ENCODE measurements at regions of chr9 and their contacts with region 1.

Region 1: DNA sequence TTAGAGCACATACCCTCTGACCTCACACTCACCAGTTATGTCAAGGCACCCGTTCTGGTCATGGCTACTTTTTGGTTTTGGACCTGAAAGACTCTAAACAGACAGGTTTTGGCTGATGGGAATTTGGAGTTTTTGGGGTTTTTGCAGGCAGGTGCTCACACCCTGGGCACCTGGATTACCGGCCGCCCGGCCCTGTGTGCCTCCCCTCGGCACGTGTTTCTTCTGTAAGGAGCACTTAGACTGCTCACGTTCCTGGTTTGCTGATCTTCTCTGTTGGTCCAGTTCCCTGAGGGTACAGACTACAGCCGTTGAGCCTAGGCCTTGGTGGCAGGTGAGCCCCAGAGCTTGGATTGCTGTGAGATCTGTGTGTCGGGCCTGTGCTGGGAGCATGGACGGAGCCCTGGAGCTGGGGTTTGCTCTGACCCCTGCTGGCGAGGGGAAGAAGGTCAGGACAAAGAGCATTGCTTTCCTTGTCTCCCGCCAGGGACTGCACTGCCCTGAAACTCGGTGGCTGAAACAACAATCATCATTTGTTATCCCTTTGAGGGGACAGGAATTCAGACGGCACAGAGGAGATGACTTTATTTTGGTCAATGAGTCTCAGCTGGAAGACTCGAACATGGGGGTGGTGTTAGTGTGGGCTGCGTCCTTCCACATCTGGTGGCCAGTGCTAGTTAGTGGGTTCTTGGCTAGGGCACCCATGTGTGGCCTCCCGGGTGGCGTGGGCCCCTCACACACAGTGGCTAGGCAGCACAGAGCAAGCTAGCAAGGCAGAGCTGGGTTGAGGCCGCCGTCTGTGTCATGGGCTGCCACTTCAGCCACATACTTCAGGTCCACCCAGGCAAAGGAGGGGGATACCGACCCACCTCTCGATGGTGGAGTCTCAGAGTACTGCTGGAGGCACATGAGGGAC is 76.4 kb downstream of the EHMT1 start:
- DNase-seq: peak; percentile 22
- H3K4me3 Mint-ChIP-seq: no peak overlapping the region
- H3K27ac Mint-ChIP-seq: no peak overlapping the region
- H3K4me1 Mint-ChIP-seq: peaks cover 53% of the 10 kb centered on the region
- H3K27me3 Mint-ChIP-seq: no peaks in the 10 kb centered on the region

Region 2: DNA sequence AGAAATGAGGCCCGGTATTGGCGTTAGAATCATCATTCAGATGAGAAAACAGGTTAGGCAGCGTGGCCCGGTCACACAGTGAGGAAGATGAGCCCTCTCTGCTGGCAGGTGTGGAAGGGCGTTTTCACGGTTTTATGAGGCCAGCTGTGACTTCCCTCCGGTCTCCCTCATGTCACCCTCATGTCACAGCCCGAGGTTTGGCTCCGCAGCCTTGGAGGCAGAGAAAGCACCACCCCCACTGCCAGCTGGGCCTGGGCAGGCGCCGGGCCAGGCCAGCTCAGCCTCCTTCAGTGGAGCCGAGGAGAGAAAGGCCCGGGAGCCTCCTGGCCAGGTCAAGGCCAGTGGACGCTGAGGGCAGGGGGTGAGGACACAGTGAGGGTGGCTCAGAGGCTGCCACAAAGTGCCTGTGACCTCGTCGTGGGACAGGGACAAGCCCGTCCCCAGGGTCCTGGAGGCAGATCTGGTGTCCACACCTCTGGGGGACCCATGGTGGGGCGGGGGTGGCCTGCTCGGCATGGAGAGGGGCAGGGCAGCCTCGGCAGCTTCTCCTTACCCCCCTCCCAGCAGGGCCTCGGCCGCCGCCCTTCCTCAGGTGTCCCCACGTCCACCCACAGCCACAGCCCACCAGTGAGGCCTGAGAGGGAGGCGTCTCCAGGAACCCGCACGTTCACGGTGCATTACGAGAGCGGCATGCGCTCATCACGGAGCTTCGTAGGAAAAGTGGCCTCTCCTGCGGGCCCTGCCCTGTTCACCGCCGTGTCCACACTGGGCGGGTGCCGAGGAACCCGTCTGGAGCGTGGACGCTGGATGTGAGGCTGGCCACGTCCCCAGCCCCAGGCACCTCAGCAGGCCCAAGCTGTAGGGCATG is 304.4 kb before region 1 on chr9:
- CTCF ChIA-PET with region 1: no interaction called
- POLR2A ChIA-PET with region 1: no interaction called
- intact Hi-C with region 1: no loop called
- DNase-seq: no peak
- H3K4me3 Mint-ChIP-seq: no peak overlapping the region
- H3K27ac Mint-ChIP-seq: no peak overlapping the region
- H3K4me1 Mint-ChIP-seq: peaks cover 6% of the 10 kb centered on the region
- H3K27me3 Mint-ChIP-seq: no peaks in the 10 kb centered on the region

Region 3: GRCh38 chr9:137672907-137673791 is 22.1 kb before region 1 on chr9:
- CTCF ChIA-PET with region 1: interaction called, 10 read pairs
- POLR2A ChIA-PET with region 1: no interaction called
- intact Hi-C with region 1: no loop called
- DNase-seq: peak; percentile 46
- H3K4me3 Mint-ChIP-seq: no peak overlapping the region
- H3K27ac Mint-ChIP-seq: peak overlapping the region; percentile 28
- H3K4me1 Mint-ChIP-seq: peaks cover 30% of the 10 kb centered on the region
- H3K27me3 Mint-ChIP-seq: no peaks in the 10 kb centered on the region

Region 4: GRCh38 chr9:137762414-137763061 is 67.3 kb after region 1 on chr9:
- CTCF ChIA-PET with region 1: no interaction called
- POLR2A ChIA-PET with region 1: no interaction called
- intact Hi-C with region 1: no loop called
- DNase-seq: peak; percentile 18
- H3K4me3 Mint-ChIP-seq: peak overlapping the region; percentile 24
- H3K27ac Mint-ChIP-seq: peak overlapping the region; percentile 82
- H3K4me1 Mint-ChIP-seq: peaks cover 51% of the 10 kb centered on the region
- H3K27me3 Mint-ChIP-seq: no peaks in the 10 kb centered on the region

Region 5: GRCh38 chr9:137918331-137919094 is 223.3 kb after region 1 on chr9:
- CTCF ChIA-PET with region 1: no interaction called
- POLR2A ChIA-PET with region 1: no interaction called
- intact Hi-C with region 1: no loop called
- DNase-seq: no peak
- H3K4me3 Mint-ChIP-seq: no peak overlapping the region
- H3K27ac Mint-ChIP-seq: no peak overlapping the region
- H3K4me1 Mint-ChIP-seq: no peaks in the 10 kb centered on the region
- H3K27me3 Mint-ChIP-seq: peaks cover 6% of the 10 kb centered on the region